ENCODE measurements at regions of chr1 and their contacts with region 1.

Region 1: DNA sequence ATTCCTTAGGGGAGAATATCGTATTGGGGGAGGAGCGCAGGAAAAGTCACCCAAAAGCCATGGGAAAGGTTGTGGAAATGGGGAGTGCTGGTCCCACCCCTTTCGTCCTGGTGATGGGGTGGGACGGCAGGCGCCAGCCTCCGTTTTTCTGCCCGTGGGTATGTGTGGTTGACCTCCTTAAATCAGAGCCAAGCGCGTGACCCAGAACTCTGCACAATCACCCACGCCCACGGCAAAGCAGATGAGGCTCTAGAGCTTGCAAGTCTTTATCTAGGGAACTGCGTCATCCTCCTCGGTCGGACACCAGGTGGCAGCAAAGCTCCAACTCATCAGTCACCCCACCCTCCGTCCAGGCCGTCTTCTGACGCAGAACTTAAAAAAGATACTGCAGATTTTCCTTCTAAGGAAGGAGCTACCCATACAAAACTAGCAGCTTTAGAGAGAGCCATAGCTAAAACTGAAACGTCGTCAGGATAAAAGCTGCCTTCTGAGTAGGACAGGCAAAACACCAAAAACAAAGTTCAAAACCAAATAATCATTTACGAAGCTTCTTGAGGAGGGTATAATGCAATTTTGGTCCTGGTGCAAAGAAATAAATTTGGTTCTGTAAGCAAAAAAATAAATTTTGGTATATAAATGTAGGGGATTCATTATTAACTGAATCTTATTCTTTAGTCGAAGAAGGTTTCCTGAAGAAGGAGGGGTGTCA is 62.0 kb downstream of the TBX19 start:
- DNase-seq: peak; percentile 88
- ATAC-seq: peak; percentile 99

Region 2: GRCh38 chr1:169348383-169349036 is 1005.8 kb after region 1 on chr1:
- intact Hi-C with region 1: loop called (anchors 5 kb)
- DNase-seq: no peak
- ATAC-seq: no peak

Measured in left ventricle myocardium superior (tissue), 1 donor.